Mammary epithelial cell (primary cell): ENCODE measurements at regions of chr7 and their contacts with region 1.

Region 1: GRCh38 chr7:57274535-57275283 is 142.5 kb upstream of the ZNF479 start:
- DNase-seq: no peak
- H3K4me3 ChIP-seq: no peak overlapping the region
- H3K27ac ChIP-seq: no peak overlapping the region
- H3K4me1 ChIP-seq: no peaks in the 10 kb centered on the region
- H3K27me3 ChIP-seq: no peaks in the 10 kb centered on the region
- CTCF ChIP-seq: no peak

Region 2: GRCh38 chr7:56483153-56483552 is 791.6 kb before region 1 on chr7:
- CTCF ChIA-PET with region 1: no interaction called
- dilution Hi-C with region 1: no loop called
- in situ Hi-C with region 1: no loop called
- intact Hi-C with region 1: no loop called
- DNase-seq: no peak
- H3K4me3 ChIP-seq: no peak overlapping the region
- H3K27ac ChIP-seq: no peak overlapping the region
- H3K4me1 ChIP-seq: no peaks in the 10 kb centered on the region
- H3K27me3 ChIP-seq: no peaks in the 10 kb centered on the region
- CTCF ChIP-seq: no peak

Region 3: DNA sequence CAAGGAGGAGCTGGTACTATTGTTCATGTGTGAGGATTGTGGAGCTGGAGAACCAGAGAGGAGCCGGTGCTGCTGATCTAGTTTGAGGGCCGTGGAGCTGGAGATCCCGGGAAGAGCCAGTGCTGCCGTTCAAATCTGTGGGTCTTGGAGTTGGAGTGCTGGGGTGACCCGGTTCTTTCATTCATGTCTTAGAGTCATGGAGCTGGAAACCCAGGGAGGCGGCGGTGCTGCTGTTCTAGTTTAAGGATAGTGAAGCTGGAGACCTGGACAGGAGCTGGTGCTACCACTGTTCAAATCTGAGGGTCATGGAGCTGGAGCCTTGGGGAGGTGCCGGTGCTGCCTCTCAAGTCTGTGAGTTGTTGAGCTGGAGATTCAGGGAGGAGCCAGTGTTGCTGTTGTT is 54.0 kb before region 1 on chr7:
- CTCF ChIA-PET with region 1: no interaction called
- dilution Hi-C with region 1: loop called (anchors 5 kb)
- in situ Hi-C with region 1: no loop called
- intact Hi-C with region 1: no loop called
- DNase-seq: no peak
- H3K4me3 ChIP-seq: no peak overlapping the region
- H3K27ac ChIP-seq: no peak overlapping the region
- H3K4me1 ChIP-seq: no peaks in the 10 kb centered on the region
- H3K27me3 ChIP-seq: no peaks in the 10 kb centered on the region
- CTCF ChIP-seq: no peak